Naive thymus-derived CD4-positive, alpha-beta T cell (primary cell): ENCODE measurements at regions of chr7 and their contacts with region 1.

Region 1: GRCh38 chr7:73578342-73579127 is at the start of gene TBL2:
- DNase-seq: peak; percentile 98 to 99 (median 98)
- ATAC-seq: peak; percentile 94
- H3K4me3 ChIP-seq: peak within 1 kb of the TSS; percentile 61
- H3K4me3 Mint-ChIP-seq: peak within 1 kb of the TSS; percentile 91 to 98 (median 96)
- H3K27ac ChIP-seq: peak within 1 kb of the TSS; percentile 88
- H3K27ac Mint-ChIP-seq: peak within 1 kb of the TSS; percentile 97 to 99 (median 98)
- H3K4me1 ChIP-seq: peaks cover 13 to 14% of the 10 kb centered on the region in 2 donors
- H3K4me1 Mint-ChIP-seq: peaks cover 14 to 35% (median 31%) of the 10 kb centered on the region in 7 donors
- H3K27me3 ChIP-seq: no peaks in the 10 kb centered on the region
- H3K27me3 Mint-ChIP-seq: no peaks in the 10 kb centered on the region
- total RNA-seq, gene TBL2: 19.2 to 40.9 (median 32.8) TPM

Region 2: GRCh38 chr7:73522105-73522872 is 56.2 kb before region 1 on chr7 and contains the start of gene BAZ1B:
- CTCF ChIA-PET with region 1: interaction called, 4 read pairs
- POLR2A ChIA-PET with region 1: interaction called, 37 read pairs
- intact Hi-C with region 1: loop called (anchors 1 kb)
- DNase-seq: peak; percentile 86 to 96 (median 91)
- ATAC-seq: peak; percentile 98
- H3K4me3 ChIP-seq: peak within 1 kb of the TSS; percentile 75
- H3K4me3 Mint-ChIP-seq: peak within 1 kb of the TSS; percentile 91 to 99 (median 96)
- H3K27ac ChIP-seq: peak within 1 kb of the TSS; percentile 85
- H3K27ac Mint-ChIP-seq: peak within 1 kb of the TSS; percentile 95 to 100 (median 98)
- H3K4me1 ChIP-seq: peaks cover 34 to 53% of the 10 kb centered on the region in 2 donors
- H3K4me1 Mint-ChIP-seq: peaks cover 56 to 78% (median 70%) of the 10 kb centered on the region in 7 donors
- H3K27me3 ChIP-seq: no peaks in the 10 kb centered on the region
- H3K27me3 Mint-ChIP-seq: no peaks in the 10 kb centered on the region
- total RNA-seq, gene BAZ1B: 44.7 to 90.3 (median 66.7) TPM

Region 3: DNA sequence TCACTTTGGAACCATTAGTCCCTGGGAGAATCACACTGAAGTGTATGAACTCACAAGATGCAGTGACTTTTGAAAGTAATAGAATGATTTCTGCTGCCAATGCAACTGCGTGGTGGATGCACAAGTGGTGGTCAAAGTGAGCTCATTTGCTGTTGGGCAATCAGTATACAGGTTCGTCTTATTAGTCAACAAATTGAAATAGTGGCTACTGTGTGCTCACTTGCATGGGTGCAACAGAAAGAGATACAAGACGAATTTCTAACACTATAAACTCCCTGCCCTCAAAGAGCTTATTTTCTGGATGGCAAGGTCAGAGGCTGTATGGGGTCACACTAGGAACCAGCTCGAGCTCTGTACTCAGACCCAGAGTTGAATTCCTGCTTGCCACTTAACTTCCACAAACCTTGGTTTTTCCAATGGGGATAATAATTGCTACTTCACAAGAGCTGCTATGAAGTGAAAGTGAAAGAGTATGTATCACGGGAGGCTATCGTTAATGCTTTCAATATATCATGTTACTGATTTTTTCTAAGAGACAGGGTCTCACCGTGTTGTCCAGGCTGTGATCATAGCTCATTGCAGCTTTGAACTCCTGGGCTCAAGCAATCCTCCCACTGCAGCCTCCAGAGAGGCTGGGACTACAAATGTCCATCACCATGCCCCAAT is 12.7 kb before region 1 on chr7:
- CTCF ChIA-PET with region 1: no interaction called
- POLR2A ChIA-PET with region 1: interaction called, 16 read pairs
- intact Hi-C with region 1: no loop called
- DNase-seq: no peak
- ATAC-seq: peak; percentile 46
- H3K4me3 ChIP-seq: peak overlapping the region; percentile 44
- H3K4me3 Mint-ChIP-seq: peak overlapping the region; percentile 70 to 88 (median 81)
- H3K27ac ChIP-seq: peak overlapping the region; percentile 48
- H3K27ac Mint-ChIP-seq: peak overlapping the region; percentile 25 to 92 (median 77)
- H3K4me1 ChIP-seq: peaks cover 7 to 18% of the 10 kb centered on the region in 2 donors
- H3K4me1 Mint-ChIP-seq: peaks cover 12 to 44% (median 33%) of the 10 kb centered on the region in 7 donors
- H3K27me3 ChIP-seq: no peaks in the 10 kb centered on the region
- H3K27me3 Mint-ChIP-seq: peaks cover 0 to 2% (median 0%) of the 10 kb centered on the region in 5 donors

Region 4: GRCh38 chr7:73667344-73668102 is 89.0 kb after region 1 on chr7 and contains the start of gene VPS37D:
- CTCF ChIA-PET with region 1: no interaction called
- POLR2A ChIA-PET with region 1: interaction called, 3 read pairs
- intact Hi-C with region 1: loop called (anchors 1 kb)
- DNase-seq: peak; percentile 84 to 99 (median 93)
- ATAC-seq: peak; percentile 98
- H3K4me3 ChIP-seq: peak within 1 kb of the TSS; percentile 44
- H3K4me3 Mint-ChIP-seq: peak within 1 kb of the TSS; percentile 61 to 84 (median 76)
- H3K27ac ChIP-seq: no peak within 1 kb of the TSS
- H3K27ac Mint-ChIP-seq: peak within 1 kb of the TSS in 5 of 9 donors; percentile 22 to 67 (median 49)
- H3K4me1 ChIP-seq: peaks cover 5 to 6% of the 10 kb centered on the region in 2 donors
- H3K4me1 Mint-ChIP-seq: peaks cover 0 to 15% (median 8%) of the 10 kb centered on the region in 7 donors
- H3K27me3 ChIP-seq: no peaks in the 10 kb centered on the region
- H3K27me3 Mint-ChIP-seq: peaks cover 27 to 58% (median 33%) of the 10 kb centered on the region in 5 donors
- total RNA-seq, gene VPS37D: 0.22 to 0.85 (median 0.44) TPM in 3 of 5 experiments, not detected in the others

Region 5: GRCh38 chr7:73718905-73719805 is 140.6 kb after region 1 on chr7 and contains the start of gene STX1A:
- CTCF ChIA-PET with region 1: no interaction called
- POLR2A ChIA-PET with region 1: no interaction called
- intact Hi-C with region 1: loop called in 1 of 2 experiments (anchors 1 kb)
- DNase-seq: peak; percentile 57 to 83 (median 69)
- ATAC-seq: peak; percentile 87
- H3K4me3 ChIP-seq: peak within 1 kb of the TSS; percentile 68
- H3K4me3 Mint-ChIP-seq: peak within 1 kb of the TSS; percentile 72 to 92 (median 84)
- H3K27ac ChIP-seq: peak within 1 kb of the TSS; percentile 71
- H3K27ac Mint-ChIP-seq: peak within 1 kb of the TSS in 8 of 9 donors; percentile 14 to 87 (median 81)
- H3K4me1 ChIP-seq: peaks cover 16 to 22% of the 10 kb centered on the region in 2 donors
- H3K4me1 Mint-ChIP-seq: peaks cover 8 to 32% (median 17%) of the 10 kb centered on the region in 7 donors
- H3K27me3 ChIP-seq: no peaks in the 10 kb centered on the region
- H3K27me3 Mint-ChIP-seq: peaks cover 0 to 24% (median 5%) of the 10 kb centered on the region in 5 donors
- total RNA-seq, gene STX1A: 9.6 to 13.4 (median 10.5) TPM

Region 6: GRCh38 chr7:73870041-73870492 is 291.5 kb after region 1 on chr7:
- CTCF ChIA-PET with region 1: no interaction called
- POLR2A ChIA-PET with region 1: no interaction called
- intact Hi-C with region 1: no loop called
- DNase-seq: no peak
- ATAC-seq: no peak
- H3K4me3 ChIP-seq: no peak overlapping the region
- H3K4me3 Mint-ChIP-seq: no peak overlapping the region
- H3K27ac ChIP-seq: no peak overlapping the region
- H3K27ac Mint-ChIP-seq: no peak overlapping the region
- H3K4me1 ChIP-seq: no peaks in the 10 kb centered on the region
- H3K4me1 Mint-ChIP-seq: peaks cover 0 to 2% (median 0%) of the 10 kb centered on the region in 7 donors
- H3K27me3 ChIP-seq: no peaks in the 10 kb centered on the region
- H3K27me3 Mint-ChIP-seq: peaks cover 0 to 4% (median 0%) of the 10 kb centered on the region in 5 donors

Region 7: GRCh38 chr7:74083117-74083876 is 504.8 kb after region 1 on chr7 and contains the start of gene LIMK1:
- CTCF ChIA-PET with region 1: no interaction called
- POLR2A ChIA-PET with region 1: no interaction called
- intact Hi-C with region 1: loop called in 1 of 2 experiments (anchors 5 kb)
- DNase-seq: peak; percentile 71 to 90 (median 83)
- ATAC-seq: peak; percentile 98
- H3K4me3 ChIP-seq: peak within 1 kb of the TSS; percentile 44
- H3K4me3 Mint-ChIP-seq: peak within 1 kb of the TSS; percentile 66 to 89 (median 80)
- H3K27ac ChIP-seq: peak within 1 kb of the TSS; percentile 69
- H3K27ac Mint-ChIP-seq: peak within 1 kb of the TSS in 8 of 9 donors; percentile 18 to 89 (median 76)
- H3K4me1 ChIP-seq: peaks cover 7 to 11% of the 10 kb centered on the region in 2 donors
- H3K4me1 Mint-ChIP-seq: peaks cover 0 to 18% (median 9%) of the 10 kb centered on the region in 7 donors
- H3K27me3 ChIP-seq: no peaks in the 10 kb centered on the region
- H3K27me3 Mint-ChIP-seq: no peaks in the 10 kb centered on the region
- total RNA-seq, gene LIMK1: 11.0 to 19.7 (median 14.1) TPM

Region 8: DNA sequence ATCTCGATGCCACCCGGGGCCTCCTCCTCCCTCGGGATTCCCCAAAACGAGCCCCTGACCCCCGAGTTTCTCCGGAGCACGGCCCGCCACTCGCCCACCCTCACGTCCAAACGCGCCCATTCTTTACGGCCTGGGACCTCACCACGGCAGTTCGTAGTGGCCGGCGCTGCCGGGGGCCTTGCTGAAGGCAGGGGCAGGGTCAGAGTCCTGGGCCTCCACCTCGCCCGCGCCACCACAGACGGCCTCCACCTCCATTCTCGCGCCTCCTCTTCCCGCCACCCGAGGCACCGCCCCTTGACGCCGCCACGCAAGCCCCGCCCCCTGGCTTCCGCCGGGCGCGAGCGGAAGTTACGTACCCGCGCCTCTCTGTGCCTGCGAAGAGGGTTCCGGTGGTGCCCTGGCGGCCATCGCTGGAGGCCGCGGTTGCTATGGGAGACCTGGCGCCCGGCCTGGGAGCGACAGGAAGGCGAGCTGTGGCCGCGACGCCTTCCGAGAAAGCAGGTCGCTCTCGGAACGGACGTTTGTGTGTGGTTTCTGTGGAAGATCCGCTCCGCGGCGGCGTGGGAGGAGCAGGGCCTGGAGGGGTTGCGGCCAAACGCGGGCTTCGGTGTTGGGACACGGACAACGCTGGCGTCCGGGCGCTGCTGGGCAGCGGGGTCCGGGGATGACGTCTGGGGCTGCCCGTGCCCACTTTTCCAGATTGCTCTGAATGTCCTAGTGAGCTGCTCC is 675.8 kb after region 1 on chr7 and contains the start of gene RFC2:
- CTCF ChIA-PET with region 1: no interaction called
- POLR2A ChIA-PET with region 1: no interaction called
- intact Hi-C with region 1: loop called in 1 of 2 experiments (anchors 5 kb)
- DNase-seq: peak; percentile 92 to 100 (median 98)
- ATAC-seq: peak; percentile 99
- H3K4me3 ChIP-seq: peak within 1 kb of the TSS; percentile 93
- H3K4me3 Mint-ChIP-seq: peak within 1 kb of the TSS; percentile 90 to 97 (median 94)
- H3K27ac ChIP-seq: peak within 1 kb of the TSS; percentile 90
- H3K27ac Mint-ChIP-seq: peak within 1 kb of the TSS; percentile 92 to 97 (median 95)
- H3K4me1 ChIP-seq: peaks cover 6 to 8% of the 10 kb centered on the region in 2 donors
- H3K4me1 Mint-ChIP-seq: peaks cover 0 to 37% (median 27%) of the 10 kb centered on the region in 7 donors
- H3K27me3 ChIP-seq: no peaks in the 10 kb centered on the region
- H3K27me3 Mint-ChIP-seq: no peaks in the 10 kb centered on the region
- total RNA-seq, gene RFC2: 12.0 to 51.7 (median 15.2) TPM